Testis (tissue), 5 donors: ENCODE measurements at regions of chr20 and their contacts with region 1.

Region 1: GRCh38 chr20:48620519-48621254 is 207.1 kb downstream of the PREX1 start:
- DNase-seq: peak; percentile 92
- H3K4me3 ChIP-seq: no peak overlapping the region
- H3K27ac ChIP-seq: peak overlapping the region in 1 of 2 donors; percentile 25
- H3K4me1 ChIP-seq: peaks cover 34% of the 10 kb centered on the region
- H3K27me3 ChIP-seq: no peaks in the 10 kb centered on the region
- CTCF ChIP-seq: peak; percentile 80 to 97 (median 94)
- POLR2A ChIP-seq: no peak

Region 2: GRCh38 chr20:47663333-47664067 is 957.2 kb before region 1 on chr20:
- intact Hi-C with region 1: loop called (anchors 5 kb)
- DNase-seq: peak; percentile 87
- H3K4me3 ChIP-seq: no peak overlapping the region
- H3K27ac ChIP-seq: peak overlapping the region in 1 of 2 donors; percentile 69
- H3K4me1 ChIP-seq: peaks cover 46% of the 10 kb centered on the region
- H3K27me3 ChIP-seq: no peaks in the 10 kb centered on the region
- CTCF ChIP-seq: peak; percentile 89 to 99 (median 94)
- POLR2A ChIP-seq: no peak

Region 3: DNA sequence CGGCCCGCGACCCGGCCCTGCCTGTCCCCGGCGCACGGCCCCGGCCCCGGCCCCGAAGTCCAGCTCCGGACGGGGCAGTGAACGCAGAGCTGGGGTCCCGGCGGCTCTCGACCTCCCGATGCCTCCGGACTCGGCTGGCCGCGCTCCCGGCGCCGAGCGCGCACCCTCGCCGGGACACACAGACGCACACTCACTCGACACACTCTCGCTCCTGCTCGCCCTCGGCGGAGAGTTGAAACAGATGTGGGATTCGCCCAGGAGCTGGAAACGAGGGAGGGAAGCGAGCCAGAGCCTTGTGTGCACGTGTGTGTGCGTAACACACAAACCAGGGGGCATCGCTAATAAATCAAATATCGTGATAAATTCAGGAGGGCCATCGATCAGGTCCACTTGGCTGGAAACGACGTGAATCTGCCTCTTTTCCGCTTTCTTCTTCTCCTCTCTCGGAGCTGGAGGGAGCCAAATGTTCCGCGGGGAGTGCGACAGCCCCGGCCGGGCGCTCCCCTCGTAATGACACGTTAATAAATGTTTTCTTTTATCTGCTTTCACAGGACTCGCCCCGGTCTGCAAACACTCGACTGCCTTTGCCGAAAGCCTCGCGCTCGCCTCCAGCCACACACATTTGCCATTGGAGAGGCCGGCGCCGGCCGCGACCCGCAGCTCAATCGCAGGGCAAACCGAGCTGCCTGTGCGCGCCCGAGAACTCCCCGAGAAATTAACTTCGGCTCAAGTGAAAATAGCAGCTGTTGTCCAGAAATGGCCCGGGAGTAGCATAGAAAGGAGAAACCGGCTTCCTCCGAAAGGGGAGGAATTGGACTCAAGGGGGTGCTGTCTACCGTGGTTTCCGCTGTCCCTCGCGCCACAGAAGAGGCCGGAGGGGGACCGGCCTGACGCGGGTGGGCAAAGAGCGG is 834.6 kb before region 1 on chr20:
- intact Hi-C with region 1: loop called (anchors 5 kb)
- DNase-seq: peak; percentile 87
- H3K4me3 ChIP-seq: peak overlapping the region; percentile 47 to 58
- H3K27ac ChIP-seq: peak overlapping the region; percentile 59 to 88
- H3K4me1 ChIP-seq: peaks cover 16% of the 10 kb centered on the region
- H3K27me3 ChIP-seq: no peaks in the 10 kb centered on the region
- CTCF ChIP-seq: peak; percentile 64 to 72 (median 64)
- POLR2A ChIP-seq: no peak